MCF 10A (cell line): ENCODE measurements at regions of chrX and their contacts with region 1.

Region 1: GRCh38 chrX:109464231-109464630 is 17.7 kb downstream of the GUCY2F start:
- DNase-seq: no peak
- H3K4me3 Mint-ChIP-seq: no peak overlapping the region
- H3K27ac Mint-ChIP-seq: no peak overlapping the region
- H3K4me1 Mint-ChIP-seq: no peaks in the 10 kb centered on the region
- H3K27me3 Mint-ChIP-seq: peaks cover 98% of the 10 kb centered on the region
- CTCF ChIP-seq: no peak

Region 2: GRCh38 chrX:109264878-109265277 is 199.4 kb before region 1 on chrX:
- CTCF ChIA-PET with region 1: no interaction called
- POLR2A ChIA-PET with region 1: no interaction called
- intact Hi-C with region 1: no loop called
- DNase-seq: no peak
- H3K4me3 Mint-ChIP-seq: no peak overlapping the region
- H3K27ac Mint-ChIP-seq: no peak overlapping the region
- H3K4me1 Mint-ChIP-seq: peaks cover 14% of the 10 kb centered on the region
- H3K27me3 Mint-ChIP-seq: peaks cover 72% of the 10 kb centered on the region
- CTCF ChIP-seq: no peak

Region 3: GRCh38 chrX:109362101-109362500 is 102.1 kb before region 1 on chrX:
- CTCF ChIA-PET with region 1: no interaction called
- POLR2A ChIA-PET with region 1: no interaction called
- intact Hi-C with region 1: no loop called
- DNase-seq: no peak
- H3K4me3 Mint-ChIP-seq: no peak overlapping the region
- H3K27ac Mint-ChIP-seq: no peak overlapping the region
- H3K4me1 Mint-ChIP-seq: no peaks in the 10 kb centered on the region
- H3K27me3 Mint-ChIP-seq: peaks cover 83% of the 10 kb centered on the region
- CTCF ChIP-seq: no peak

Region 4: DNA sequence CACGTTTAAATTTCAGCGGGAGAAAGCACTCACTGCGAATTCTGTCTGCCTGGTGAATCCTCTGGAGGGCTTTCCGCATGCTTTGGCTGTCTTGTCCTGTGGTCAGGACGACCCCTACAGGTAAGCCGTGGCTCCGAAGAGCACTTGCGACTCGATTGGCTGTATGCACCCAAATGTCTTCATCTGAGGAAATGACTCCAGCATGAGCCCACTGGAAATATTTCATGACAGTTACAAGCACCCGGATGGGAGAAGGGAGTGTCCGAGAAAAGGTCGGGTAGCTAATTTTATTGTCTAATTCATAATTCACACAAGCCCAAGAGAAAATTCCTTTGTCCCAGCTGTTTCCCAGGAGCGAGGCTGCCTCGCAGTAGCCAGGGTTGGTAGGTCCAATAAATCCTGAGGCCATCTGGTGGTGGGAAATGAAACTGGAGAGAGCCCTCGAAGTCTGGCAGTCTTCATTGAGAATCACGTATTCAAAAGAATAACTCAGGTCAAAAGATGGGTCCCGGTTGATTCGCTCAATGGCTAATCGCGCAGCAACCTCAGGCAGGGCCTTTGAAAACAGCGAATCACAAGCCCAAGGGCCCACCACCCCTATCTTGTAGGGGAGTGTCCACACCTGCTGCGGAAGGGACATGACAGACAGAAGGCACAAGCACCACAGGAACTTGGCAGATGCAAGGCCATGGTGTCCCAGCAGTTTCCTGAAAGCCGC is 11.1 kb after region 1 on chrX:
- CTCF ChIA-PET with region 1: interaction called, 13 read pairs
- POLR2A ChIA-PET with region 1: interaction called, 3 read pairs
- intact Hi-C with region 1: no loop called
- DNase-seq: peak; percentile 54
- H3K4me3 Mint-ChIP-seq: no peak overlapping the region
- H3K27ac Mint-ChIP-seq: no peak overlapping the region
- H3K4me1 Mint-ChIP-seq: peaks cover 9% of the 10 kb centered on the region
- H3K27me3 Mint-ChIP-seq: peaks cover 21% of the 10 kb centered on the region
- CTCF ChIP-seq: peak; percentile 19

Region 5: GRCh38 chrX:109585488-109585887 is 121.3 kb after region 1 on chrX:
- CTCF ChIA-PET with region 1: no interaction called
- POLR2A ChIA-PET with region 1: no interaction called
- intact Hi-C with region 1: no loop called
- DNase-seq: no peak
- H3K4me3 Mint-ChIP-seq: no peak overlapping the region
- H3K27ac Mint-ChIP-seq: no peak overlapping the region
- H3K4me1 Mint-ChIP-seq: no peaks in the 10 kb centered on the region
- H3K27me3 Mint-ChIP-seq: peaks cover 77% of the 10 kb centered on the region
- CTCF ChIP-seq: no peak

Region 6: GRCh38 chrX:110276778-110277177 is 812.5 kb after region 1 on chrX:
- CTCF ChIA-PET with region 1: no interaction called
- POLR2A ChIA-PET with region 1: no interaction called
- intact Hi-C with region 1: no loop called
- DNase-seq: no peak
- H3K4me3 Mint-ChIP-seq: no peak overlapping the region
- H3K27ac Mint-ChIP-seq: no peak overlapping the region
- H3K4me1 Mint-ChIP-seq: no peaks in the 10 kb centered on the region
- H3K27me3 Mint-ChIP-seq: peaks cover 45% of the 10 kb centered on the region
- CTCF ChIP-seq: no peak